Endothelial cell of umbilical vein (primary cell): ENCODE measurements at regions of chr20 and their contacts with region 1.

Region 1: GRCh38 chr20:39264506-39265172 is 302.5 kb downstream of the DHX35 start:
- DNase-seq: peak; percentile 72
- H3K4me3 ChIP-seq: no peak overlapping the region
- H3K27ac ChIP-seq: no peak overlapping the region
- H3K4me1 ChIP-seq: peaks cover 4% of the 10 kb centered on the region
- H3K27me3 ChIP-seq: no peaks in the 10 kb centered on the region
- CTCF ChIP-seq: peak; percentile 87 to 93
- POLR2A ChIP-seq: no peak

Region 2: DNA sequence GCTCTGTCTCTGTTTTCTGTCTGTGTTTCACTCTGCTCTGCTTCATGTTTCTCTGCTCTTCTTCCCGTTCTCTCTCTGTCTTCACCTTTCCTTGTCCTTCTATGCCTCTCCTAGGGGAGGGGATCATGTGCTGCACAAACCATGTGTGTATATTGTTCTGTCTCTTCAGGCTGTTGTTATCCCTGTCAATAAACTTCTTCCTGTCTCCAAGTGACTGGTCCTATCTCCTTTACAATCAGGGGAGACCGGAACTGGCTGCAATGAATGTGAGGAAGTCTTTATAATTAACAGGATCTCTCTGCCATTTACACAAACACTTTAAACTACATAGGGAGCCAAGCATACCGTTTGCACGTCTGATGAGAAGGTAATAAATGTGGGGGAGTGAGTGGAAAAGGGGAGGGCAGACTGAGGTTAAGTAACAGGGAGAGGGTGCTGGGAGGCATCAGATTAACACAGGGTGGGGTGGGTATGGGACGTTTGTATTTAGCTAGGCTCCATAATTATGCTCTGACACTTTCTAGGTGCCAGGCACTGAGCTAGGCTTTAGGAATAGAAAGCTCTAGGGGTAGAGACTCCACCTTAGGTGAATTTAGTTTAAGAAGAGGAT is 323.6 kb after region 1 on chr20:
- CTCF ChIA-PET with region 1: no interaction called
- POLR2A ChIA-PET with region 1: no interaction called
- dilution Hi-C with region 1: no loop called
- intact Hi-C with region 1: loop called (anchors 1 kb)
- DNase-seq: peak; percentile 89
- H3K4me3 ChIP-seq: peak overlapping the region in 1 of 3 experiments; percentile 24
- H3K27ac ChIP-seq: peak overlapping the region; percentile 74
- H3K4me1 ChIP-seq: peaks cover 21% of the 10 kb centered on the region
- H3K27me3 ChIP-seq: no peaks in the 10 kb centered on the region
- CTCF ChIP-seq: no peak
- POLR2A ChIP-seq: no peak

Region 3: GRCh38 chr20:39874049-39874888 is 609.6 kb after region 1 on chr20:
- CTCF ChIA-PET with region 1: interaction called, 157 read pairs
- POLR2A ChIA-PET with region 1: interaction called, 5 read pairs
- dilution Hi-C with region 1: no loop called
- intact Hi-C with region 1: loop called (anchors 1 kb)
- DNase-seq: peak; percentile 90
- H3K4me3 ChIP-seq: peak overlapping the region in 1 of 3 experiments; percentile 32
- H3K27ac ChIP-seq: no peak overlapping the region
- H3K4me1 ChIP-seq: peaks cover 2% of the 10 kb centered on the region
- H3K27me3 ChIP-seq: peaks cover 0 to 2% of the 10 kb centered on the region in 2 experiments
- CTCF ChIP-seq: peak; percentile 96 to 98
- POLR2A ChIP-seq: no peak

Region 4: DNA sequence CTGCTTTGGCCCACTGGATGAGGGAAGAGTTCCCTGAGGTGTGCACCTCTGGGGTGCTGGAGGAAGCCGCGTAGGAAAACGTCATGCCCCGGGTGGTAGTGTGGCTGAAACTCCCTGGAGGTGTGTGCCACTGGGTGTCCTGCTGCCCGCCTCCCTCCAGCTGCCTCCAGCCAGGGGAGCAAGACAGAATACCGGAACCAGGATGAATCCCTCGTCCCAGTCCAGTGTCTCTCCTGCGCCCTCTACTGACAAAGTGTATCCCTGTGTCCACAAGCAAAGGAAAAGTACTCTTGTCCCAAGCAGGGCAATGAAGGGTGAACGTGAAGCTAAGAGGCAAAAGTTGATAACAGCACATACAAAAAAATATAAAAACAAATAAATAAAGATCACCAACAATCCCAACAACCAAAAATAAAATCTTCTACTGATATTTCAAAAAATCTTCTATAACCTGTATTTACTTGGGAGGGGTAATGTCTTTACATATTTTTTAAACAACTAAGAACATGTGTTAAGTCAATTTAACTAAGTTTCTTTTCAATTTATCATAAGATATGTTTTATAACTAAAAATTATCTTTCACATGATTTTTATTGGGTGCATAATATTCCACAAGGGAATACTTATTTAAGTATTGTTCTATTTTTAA is 986.8 kb after region 1 on chr20:
- CTCF ChIA-PET with region 1: interaction called, 3 read pairs
- POLR2A ChIA-PET with region 1: no interaction called
- dilution Hi-C with region 1: no loop called
- intact Hi-C with region 1: loop called (anchors 2 kb)
- DNase-seq: peak; percentile 17
- H3K4me3 ChIP-seq: no peak overlapping the region
- H3K27ac ChIP-seq: no peak overlapping the region
- H3K4me1 ChIP-seq: no peaks in the 10 kb centered on the region
- H3K27me3 ChIP-seq: no peaks in the 10 kb centered on the region
- CTCF ChIP-seq: peak in 1 of 2 donors; percentile 27
- POLR2A ChIP-seq: no peak

Region 5: DNA sequence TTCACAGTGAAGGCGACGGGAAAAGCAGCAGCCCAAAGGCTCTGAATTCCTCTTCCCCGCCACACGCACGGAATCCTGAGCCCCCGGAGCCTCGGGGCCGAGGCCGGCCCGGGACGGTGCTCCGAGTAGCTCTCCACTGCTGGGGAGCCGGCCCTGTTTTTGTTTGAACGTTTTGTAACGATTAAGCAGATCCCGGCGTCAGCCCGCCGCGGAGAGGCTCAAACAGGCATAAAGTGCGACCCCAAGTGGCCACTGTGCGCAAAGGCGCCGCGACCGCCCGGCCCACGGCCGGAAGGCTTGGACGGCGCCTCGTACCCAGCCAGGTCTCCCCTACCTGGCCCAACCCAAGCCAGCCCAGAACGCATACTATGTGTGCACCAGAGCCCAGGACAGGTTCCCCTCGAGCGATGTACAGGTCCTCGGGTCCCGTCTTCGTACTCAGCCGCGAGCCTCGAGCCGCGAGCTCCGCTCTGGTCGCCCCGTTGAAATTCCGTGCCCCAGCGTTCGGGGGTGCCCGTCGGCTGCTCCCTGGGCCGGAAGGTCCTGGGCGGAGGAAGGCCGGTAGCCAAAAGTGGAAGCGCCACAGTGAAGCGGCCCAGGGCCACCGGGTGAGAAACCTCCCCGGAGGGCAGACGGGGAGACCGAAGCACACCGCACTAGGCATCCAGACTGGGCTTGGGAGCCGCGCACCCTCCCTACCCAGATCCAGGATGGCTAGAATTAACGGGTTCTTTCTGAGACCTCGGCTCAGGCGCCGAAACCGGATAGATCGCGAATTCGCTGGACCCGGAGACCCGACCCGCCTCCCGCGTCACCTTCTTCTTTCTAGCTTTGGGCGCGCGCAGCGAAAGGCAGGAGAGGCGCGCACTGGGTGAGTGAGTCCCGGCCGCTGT is 1425.5 kb after region 1 on chr20:
- CTCF ChIA-PET with region 1: interaction called, 31 read pairs
- POLR2A ChIA-PET with region 1: interaction called, 5 read pairs
- dilution Hi-C with region 1: no loop called
- intact Hi-C with region 1: loop called (anchors 2 kb)
- DNase-seq: peak; percentile 81
- H3K4me3 ChIP-seq: peak overlapping the region; percentile 16 to 38 (median 24)
- H3K27ac ChIP-seq: peak overlapping the region; percentile 9
- H3K4me1 ChIP-seq: peaks cover 9% of the 10 kb centered on the region
- H3K27me3 ChIP-seq: peaks cover 45 to 65% of the 10 kb centered on the region in 2 experiments
- CTCF ChIP-seq: peak; percentile 95
- POLR2A ChIP-seq: no peak